ENCODE measurements at regions of chr16 and their contacts with region 1.

Region 1: GRCh38 chr16:74309789-74310781 is 13.5 kb downstream of the PSMD7 start:
- DNase-seq: peak; percentile 49
- H3K4me3 ChIP-seq: no peak overlapping the region
- H3K27ac ChIP-seq: no peak overlapping the region
- H3K4me1 ChIP-seq: no peaks in the 10 kb centered on the region
- H3K27me3 ChIP-seq: no peaks in the 10 kb centered on the region
- CTCF ChIP-seq: peak; percentile 61 to 71
- POLR2A ChIP-seq: no peak

Region 2: DNA sequence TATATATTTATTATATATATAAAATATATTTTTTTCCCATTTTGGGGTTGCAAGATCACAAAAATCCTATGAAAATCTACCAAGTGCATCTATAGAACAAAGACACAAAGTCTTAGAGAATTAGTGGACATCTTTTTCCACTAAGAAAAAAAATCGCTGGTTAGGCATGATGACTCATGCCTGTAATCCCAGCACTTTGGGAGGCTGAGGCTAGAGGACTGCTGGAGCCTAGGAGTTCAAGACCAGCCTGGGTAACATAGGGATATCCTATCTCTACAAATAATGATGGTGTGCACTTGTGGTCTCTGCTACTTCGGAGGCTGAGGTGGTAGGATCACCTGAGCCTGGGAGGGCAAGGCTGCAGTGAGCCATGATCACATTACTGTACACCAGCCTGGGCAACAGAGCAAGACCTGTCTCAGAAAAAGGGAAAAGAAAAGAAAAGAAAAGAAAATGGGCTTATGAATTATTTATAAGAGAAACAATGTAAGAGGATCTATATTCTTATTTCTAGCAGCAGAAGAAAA is 198.6 kb before region 1 on chr16:
- CTCF ChIA-PET with region 1: no interaction called
- POLR2A ChIA-PET with region 1: no interaction called
- dilution Hi-C with region 1: no loop called
- intact Hi-C with region 1: no loop called
- DNase-seq: no peak
- H3K4me3 ChIP-seq: no peak overlapping the region
- H3K27ac ChIP-seq: no peak overlapping the region
- H3K4me1 ChIP-seq: no peaks in the 10 kb centered on the region
- H3K27me3 ChIP-seq: no peaks in the 10 kb centered on the region
- CTCF ChIP-seq: no peak
- POLR2A ChIP-seq: no peak

Region 3: GRCh38 chr16:74320707-74321106 is 10.6 kb after region 1 on chr16:
- CTCF ChIA-PET with region 1: interaction called, 11 read pairs
- POLR2A ChIA-PET with region 1: no interaction called
- dilution Hi-C with region 1: no loop called
- intact Hi-C with region 1: no loop called
- DNase-seq: no peak
- H3K4me3 ChIP-seq: no peak overlapping the region
- H3K27ac ChIP-seq: no peak overlapping the region
- H3K4me1 ChIP-seq: no peaks in the 10 kb centered on the region
- H3K27me3 ChIP-seq: no peaks in the 10 kb centered on the region
- CTCF ChIP-seq: no peak
- POLR2A ChIP-seq: no peak

Region 4: DNA sequence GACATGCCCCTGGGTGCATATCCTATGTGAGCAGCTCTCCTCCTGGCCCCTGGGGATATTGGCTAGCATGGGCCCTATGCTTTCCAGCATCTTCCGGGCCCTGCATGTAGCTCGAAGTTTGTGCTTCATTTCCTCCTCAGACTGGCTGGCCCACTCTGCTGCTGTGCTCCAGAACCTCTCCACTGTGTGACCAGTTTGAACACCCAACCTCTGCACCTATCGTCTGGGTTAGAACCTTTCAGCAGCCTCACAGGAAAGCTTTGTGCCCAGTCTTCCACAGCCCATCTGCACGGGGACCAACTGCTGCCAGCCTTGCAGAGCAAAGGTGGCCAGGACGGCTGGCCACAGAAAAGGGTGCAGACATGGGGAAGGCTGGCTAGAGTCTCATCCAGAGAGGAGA is 121.4 kb after region 1 on chr16:
- CTCF ChIA-PET with region 1: interaction called, 8 read pairs
- POLR2A ChIA-PET with region 1: no interaction called
- dilution Hi-C with region 1: no loop called
- intact Hi-C with region 1: loop called (anchors 2 kb)
- DNase-seq: no peak
- H3K4me3 ChIP-seq: no peak overlapping the region
- H3K27ac ChIP-seq: no peak overlapping the region
- H3K4me1 ChIP-seq: no peaks in the 10 kb centered on the region
- H3K27me3 ChIP-seq: no peaks in the 10 kb centered on the region
- CTCF ChIP-seq: no peak
- POLR2A ChIP-seq: no peak

Region 5: DNA sequence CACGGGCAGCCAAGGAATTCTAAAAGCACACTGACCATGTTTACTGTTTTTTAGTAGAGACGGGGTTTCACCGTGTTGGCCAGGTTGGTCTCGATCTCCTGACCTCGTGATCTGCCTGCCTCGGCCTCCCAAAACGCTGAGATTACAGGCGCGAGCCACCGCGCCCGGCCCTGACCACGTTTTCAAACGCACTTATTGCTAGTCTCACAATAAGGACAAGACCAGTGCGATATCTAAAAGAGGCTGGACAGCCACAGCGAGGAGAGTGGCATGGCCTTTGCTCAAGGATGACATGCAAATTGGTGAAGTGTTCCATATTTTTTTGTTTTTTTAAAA is 146.2 kb after region 1 on chr16:
- CTCF ChIA-PET with region 1: no interaction called
- POLR2A ChIA-PET with region 1: no interaction called
- dilution Hi-C with region 1: no loop called
- intact Hi-C with region 1: no loop called
- DNase-seq: no peak
- H3K4me3 ChIP-seq: no peak overlapping the region
- H3K27ac ChIP-seq: peak overlapping the region; percentile 35
- H3K4me1 ChIP-seq: peaks cover 22% of the 10 kb centered on the region
- H3K27me3 ChIP-seq: no peaks in the 10 kb centered on the region
- CTCF ChIP-seq: no peak
- POLR2A ChIP-seq: no peak

Region 6: GRCh38 chr16:74623214-74623842 is 313.2 kb after region 1 on chr16:
- CTCF ChIA-PET with region 1: interaction called, 3 read pairs
- POLR2A ChIA-PET with region 1: no interaction called
- dilution Hi-C with region 1: no loop called
- intact Hi-C with region 1: loop called (anchors 1 kb)
- DNase-seq: peak; percentile 73
- H3K4me3 ChIP-seq: no peak overlapping the region
- H3K27ac ChIP-seq: no peak overlapping the region
- H3K4me1 ChIP-seq: no peaks in the 10 kb centered on the region
- H3K27me3 ChIP-seq: no peaks in the 10 kb centered on the region
- CTCF ChIP-seq: peak; percentile 44 to 45
- POLR2A ChIP-seq: no peak

Measured in endothelial cell of umbilical vein (primary cell).